Right ventricle myocardium inferior (tissue), 1 donor: ENCODE measurements at regions of chr2 and their contacts with region 1.

Region 1: DNA sequence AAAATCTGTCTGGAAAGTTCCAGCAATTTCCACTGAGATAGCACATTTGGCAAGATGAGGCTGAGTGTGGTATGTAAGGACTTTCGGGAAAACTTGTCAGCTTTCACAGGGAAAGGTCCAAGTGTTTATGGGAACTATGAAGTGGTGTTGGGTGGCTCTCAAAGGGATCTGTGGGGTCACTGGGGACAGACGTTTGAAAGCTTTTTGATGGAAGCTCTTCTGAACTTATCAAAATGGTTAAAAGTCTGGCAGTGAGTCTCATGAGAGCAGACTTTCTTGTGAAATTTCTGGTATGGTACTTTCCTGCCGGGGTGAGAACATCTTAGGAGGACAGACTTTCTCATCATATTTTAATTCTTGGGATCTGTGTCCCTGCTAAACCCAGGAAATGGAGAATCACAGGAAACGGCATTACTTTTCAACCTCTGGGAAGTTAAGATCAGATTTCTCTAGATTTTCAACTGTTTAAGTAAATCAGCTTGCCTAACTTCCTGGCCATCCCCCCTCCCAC is 546.3 kb upstream of the ZEB2 start:
- DNase-seq: no peak
- ATAC-seq: peak; percentile 85

Region 2: GRCh38 chr2:145000376-145000775 is 65.8 kb before region 1 on chr2:
- intact Hi-C with region 1: loop called (anchors 5 kb)
- DNase-seq: no peak
- ATAC-seq: no peak

Region 3: GRCh38 chr2:145026456-145027455 is 39.5 kb before region 1 on chr2:
- intact Hi-C with region 1: loop called (anchors 1 kb)
- DNase-seq: no peak
- ATAC-seq: no peak